Aorta (tissue), 5 donors: ENCODE measurements at regions of chr19 and their contacts with region 1.

Region 1: DNA sequence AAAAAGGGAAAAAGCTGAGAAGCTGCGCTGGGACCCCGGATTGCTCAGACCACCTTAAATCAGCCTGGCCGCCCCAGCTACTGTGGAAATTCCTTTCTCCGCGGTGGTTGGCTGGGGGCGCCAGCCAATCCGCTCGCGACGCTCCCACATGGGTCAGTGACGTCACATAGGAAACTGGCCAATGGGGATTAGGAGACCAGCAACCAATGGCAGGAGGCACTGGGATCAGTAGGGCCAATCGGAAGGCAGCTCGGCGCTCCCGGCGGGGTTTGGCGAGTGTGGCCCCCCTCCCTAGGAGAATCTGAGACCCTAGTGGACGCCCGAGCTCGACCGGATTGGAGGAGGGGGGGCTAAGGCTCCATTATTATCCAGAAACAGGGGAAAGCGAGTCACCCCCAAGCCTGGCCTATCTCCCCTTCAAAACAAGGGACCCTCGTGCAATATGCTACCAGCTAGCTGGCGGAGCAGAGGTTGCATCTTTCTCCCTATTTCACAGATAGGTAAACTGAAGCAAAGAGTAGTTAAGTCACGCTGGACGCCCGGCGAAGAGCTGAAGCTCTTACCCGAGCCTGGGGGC is 6.5 kb upstream of the TLE2 start:
- DNase-seq: peak; percentile 97 to 99
- ATAC-seq: peak; percentile 97
- H3K4me3 ChIP-seq: peak overlapping the region; percentile 33 to 49
- H3K27ac ChIP-seq: peak overlapping the region in 1 of 2 donors; percentile 93
- H3K4me1 ChIP-seq: no peaks in the 10 kb centered on the region
- H3K27me3 ChIP-seq: no peaks in the 10 kb centered on the region

Region 2: GRCh38 chr19:2977001-2977685 is 58.5 kb before region 1 on chr19 and contains the start of gene TLE6:
- intact Hi-C with region 1: loop called (anchors 2 to 5 kb)
- DNase-seq: peak; percentile 97 to 98
- ATAC-seq: peak; percentile 96
- H3K4me3 ChIP-seq: peak within 1 kb of the TSS; percentile 21 to 57
- H3K27ac ChIP-seq: no peak within 1 kb of the TSS
- H3K4me1 ChIP-seq: no peaks in the 10 kb centered on the region
- H3K27me3 ChIP-seq: no peaks in the 10 kb centered on the region
- total RNA-seq, gene TLE6: 0.65 to 3.5 TPM

Region 3: GRCh38 chr19:2983351-2984195 is 52.1 kb before region 1 on chr19:
- intact Hi-C with region 1: loop called in 1 of 2 experiments (anchors 5 kb)
- DNase-seq: peak in 1 of 2 donors; percentile 88
- ATAC-seq: peak; percentile 85
- H3K4me3 ChIP-seq: no peak overlapping the region
- H3K27ac ChIP-seq: peak overlapping the region; percentile 7 to 64
- H3K4me1 ChIP-seq: no peaks in the 10 kb centered on the region
- H3K27me3 ChIP-seq: no peaks in the 10 kb centered on the region

Region 4: GRCh38 chr19:3210347-3211017 is 174.9 kb after region 1 on chr19:
- intact Hi-C with region 1: no loop called
- DNase-seq: peak in 1 of 2 donors; percentile 85
- ATAC-seq: peak; percentile 59
- H3K4me3 ChIP-seq: no peak overlapping the region
- H3K27ac ChIP-seq: no peak overlapping the region
- H3K4me1 ChIP-seq: no peaks in the 10 kb centered on the region
- H3K27me3 ChIP-seq: no peaks in the 10 kb centered on the region